ENCODE measurements at regions of chr1 and their contacts with region 1.

Region 1: DNA sequence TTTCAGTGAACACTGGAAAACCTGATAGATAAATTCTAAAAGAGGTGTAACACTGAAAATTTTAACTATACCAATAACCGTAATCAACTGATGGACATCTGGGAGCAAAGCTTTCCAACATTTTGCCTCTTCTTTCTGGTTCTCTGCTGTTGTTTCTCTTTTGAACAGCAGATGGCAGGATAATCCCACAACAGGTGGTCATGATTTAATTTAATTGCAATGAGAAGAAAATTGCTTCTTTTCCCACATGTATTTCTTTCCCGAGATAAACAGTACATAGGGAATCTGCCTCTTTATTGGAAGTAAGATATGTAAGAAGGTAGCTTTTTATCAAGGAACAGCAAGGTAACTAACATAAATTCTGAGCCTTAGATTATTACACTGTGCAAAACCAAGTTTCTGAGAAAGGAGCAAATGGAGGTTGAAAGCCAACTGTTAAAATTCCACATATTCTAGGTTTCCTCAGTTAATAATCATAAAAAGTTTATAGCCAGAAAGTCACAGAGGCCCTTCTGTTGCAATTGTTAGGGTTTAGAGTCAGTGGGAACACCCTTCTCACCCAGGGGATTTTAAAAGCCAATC is 72.9 kb downstream of the RPS6KA1 start:
- DNase-seq: peak in 5 of 9 experiments; percentile 16 to 81 (median 49)
- ATAC-seq: peak; percentile 67
- H3K4me3 ChIP-seq: no peak overlapping the region
- H3K4me3 Mint-ChIP-seq: no peak overlapping the region
- H3K27ac ChIP-seq: no peak overlapping the region
- H3K27ac Mint-ChIP-seq: no peak overlapping the region
- H3K4me1 ChIP-seq: peaks cover 5% of the 10 kb centered on the region
- H3K4me1 Mint-ChIP-seq: peaks cover 8% of the 10 kb centered on the region
- H3K27me3 ChIP-seq: no peaks in the 10 kb centered on the region
- H3K27me3 Mint-ChIP-seq: no peaks in the 10 kb centered on the region
- CTCF ChIP-seq: peak; percentile 98

Region 2: GRCh38 chr1:26372039-26372438 is 230.4 kb before region 1 on chr1:
- CTCF ChIA-PET with region 1: no interaction called
- POLR2A ChIA-PET with region 1: no interaction called
- intact Hi-C with region 1: no loop called
- DNase-seq: no peak
- ATAC-seq: no peak
- H3K4me3 ChIP-seq: no peak overlapping the region
- H3K4me3 Mint-ChIP-seq: no peak overlapping the region
- H3K27ac ChIP-seq: peak overlapping the region in 1 of 2 experiments; percentile 54
- H3K27ac Mint-ChIP-seq: peak overlapping the region; percentile 66
- H3K4me1 ChIP-seq: peaks cover 88% of the 10 kb centered on the region
- H3K4me1 Mint-ChIP-seq: peaks cover 82% of the 10 kb centered on the region
- H3K27me3 ChIP-seq: no peaks in the 10 kb centered on the region
- H3K27me3 Mint-ChIP-seq: no peaks in the 10 kb centered on the region
- CTCF ChIP-seq: no peak

Region 3: DNA sequence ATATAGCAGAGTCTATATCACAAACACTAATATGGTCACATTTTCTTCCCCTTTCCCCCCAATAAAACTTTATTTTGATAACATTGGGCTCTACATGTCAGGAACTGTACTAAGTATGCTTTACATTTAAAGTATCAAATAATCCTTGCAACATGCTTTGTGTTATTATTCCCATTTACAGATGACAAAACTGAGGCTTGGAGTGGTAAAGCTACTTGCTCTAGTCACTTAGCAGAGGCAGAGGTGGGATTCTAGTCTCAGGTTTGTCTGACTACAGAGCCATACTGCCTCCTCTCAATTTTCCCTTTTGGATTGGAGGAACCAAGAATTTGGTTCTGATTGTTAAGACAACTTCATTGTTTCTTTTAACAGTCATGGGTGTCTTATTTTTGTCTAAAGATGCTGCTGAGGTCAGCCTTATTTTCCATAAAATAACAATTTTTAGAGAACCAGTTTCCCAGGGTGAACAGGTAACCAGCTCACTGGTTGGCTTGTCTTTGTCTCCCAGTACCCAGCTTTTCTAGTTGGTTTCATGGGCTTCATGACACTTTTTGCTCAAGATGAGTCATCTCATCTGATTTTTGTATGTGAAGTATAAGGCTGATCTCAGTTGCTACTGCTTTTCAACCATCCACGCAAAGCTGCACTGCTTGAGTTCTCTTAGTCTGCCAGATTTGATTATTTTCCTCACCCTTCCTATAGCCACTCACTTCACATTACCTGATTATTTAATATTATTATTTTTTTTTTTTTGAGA is 12.4 kb after region 1 on chr1:
- CTCF ChIA-PET with region 1: interaction called, 24 read pairs
- POLR2A ChIA-PET with region 1: interaction called, 3 read pairs
- intact Hi-C with region 1: no loop called
- DNase-seq: no peak
- ATAC-seq: no peak
- H3K4me3 ChIP-seq: no peak overlapping the region
- H3K4me3 Mint-ChIP-seq: no peak overlapping the region
- H3K27ac ChIP-seq: no peak overlapping the region
- H3K27ac Mint-ChIP-seq: no peak overlapping the region
- H3K4me1 ChIP-seq: peaks cover 16% of the 10 kb centered on the region
- H3K4me1 Mint-ChIP-seq: peaks cover 18% of the 10 kb centered on the region
- H3K27me3 ChIP-seq: no peaks in the 10 kb centered on the region
- H3K27me3 Mint-ChIP-seq: no peaks in the 10 kb centered on the region
- CTCF ChIP-seq: no peak

Region 4: DNA sequence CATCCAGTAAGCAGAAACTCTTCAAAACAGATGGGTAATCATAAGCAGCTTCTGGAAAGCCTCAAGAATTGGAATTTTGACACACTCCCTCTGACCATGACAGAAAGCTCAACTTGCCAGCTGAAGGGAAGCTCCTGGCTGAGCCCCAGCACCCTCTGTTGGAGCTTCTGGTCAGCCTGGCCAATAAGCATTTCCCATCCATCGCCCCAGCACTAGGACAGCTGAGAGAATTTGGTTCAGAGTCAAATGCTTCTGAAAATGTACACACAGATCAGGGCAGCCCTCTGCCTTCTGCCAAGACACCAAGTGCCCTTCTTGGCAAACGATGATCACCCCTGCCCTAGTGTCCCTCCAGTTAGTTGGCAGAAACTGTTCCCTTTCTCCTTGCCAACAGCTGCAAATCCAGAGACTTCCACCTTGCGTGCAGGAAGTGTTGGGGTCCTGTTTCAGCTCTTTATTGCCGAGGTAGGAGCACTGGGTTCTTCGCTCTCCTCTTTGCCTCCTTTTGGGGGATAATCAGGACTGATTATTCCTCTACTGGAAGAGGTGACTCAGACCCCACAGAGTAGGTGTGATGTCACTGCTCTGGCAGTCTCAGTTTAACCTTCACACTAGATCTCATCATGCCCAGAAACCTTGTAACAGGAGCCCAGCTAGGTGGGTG is 197.1 kb after region 1 on chr1:
- CTCF ChIA-PET with region 1: interaction called, 36 read pairs
- POLR2A ChIA-PET with region 1: no interaction called
- intact Hi-C with region 1: no loop called
- DNase-seq: peak in 5 of 9 experiments; percentile 20 to 63 (median 39)
- ATAC-seq: peak; percentile 69
- H3K4me3 ChIP-seq: no peak overlapping the region
- H3K4me3 Mint-ChIP-seq: peak overlapping the region; percentile 73
- H3K27ac ChIP-seq: peak overlapping the region; percentile 26 to 87
- H3K27ac Mint-ChIP-seq: peak overlapping the region; percentile 97
- H3K4me1 ChIP-seq: peaks cover 39% of the 10 kb centered on the region
- H3K4me1 Mint-ChIP-seq: peaks cover 36% of the 10 kb centered on the region
- H3K27me3 ChIP-seq: no peaks in the 10 kb centered on the region
- H3K27me3 Mint-ChIP-seq: no peaks in the 10 kb centered on the region
- CTCF ChIP-seq: no peak

Region 5: GRCh38 chr1:26853156-26853555 is 250.7 kb after region 1 on chr1:
- CTCF ChIA-PET with region 1: interaction called, 9 read pairs
- POLR2A ChIA-PET with region 1: no interaction called
- intact Hi-C with region 1: loop called in 1 of 2 experiments (anchors 1 kb)
- DNase-seq: peak; percentile 58 to 90 (median 80)
- ATAC-seq: peak; percentile 94
- H3K4me3 ChIP-seq: no peak overlapping the region
- H3K4me3 Mint-ChIP-seq: no peak overlapping the region
- H3K27ac ChIP-seq: no peak overlapping the region
- H3K27ac Mint-ChIP-seq: no peak overlapping the region
- H3K4me1 ChIP-seq: no peaks in the 10 kb centered on the region
- H3K4me1 Mint-ChIP-seq: no peaks in the 10 kb centered on the region
- H3K27me3 ChIP-seq: no peaks in the 10 kb centered on the region
- H3K27me3 Mint-ChIP-seq: no peaks in the 10 kb centered on the region
- CTCF ChIP-seq: peak; percentile 78

Region 6: DNA sequence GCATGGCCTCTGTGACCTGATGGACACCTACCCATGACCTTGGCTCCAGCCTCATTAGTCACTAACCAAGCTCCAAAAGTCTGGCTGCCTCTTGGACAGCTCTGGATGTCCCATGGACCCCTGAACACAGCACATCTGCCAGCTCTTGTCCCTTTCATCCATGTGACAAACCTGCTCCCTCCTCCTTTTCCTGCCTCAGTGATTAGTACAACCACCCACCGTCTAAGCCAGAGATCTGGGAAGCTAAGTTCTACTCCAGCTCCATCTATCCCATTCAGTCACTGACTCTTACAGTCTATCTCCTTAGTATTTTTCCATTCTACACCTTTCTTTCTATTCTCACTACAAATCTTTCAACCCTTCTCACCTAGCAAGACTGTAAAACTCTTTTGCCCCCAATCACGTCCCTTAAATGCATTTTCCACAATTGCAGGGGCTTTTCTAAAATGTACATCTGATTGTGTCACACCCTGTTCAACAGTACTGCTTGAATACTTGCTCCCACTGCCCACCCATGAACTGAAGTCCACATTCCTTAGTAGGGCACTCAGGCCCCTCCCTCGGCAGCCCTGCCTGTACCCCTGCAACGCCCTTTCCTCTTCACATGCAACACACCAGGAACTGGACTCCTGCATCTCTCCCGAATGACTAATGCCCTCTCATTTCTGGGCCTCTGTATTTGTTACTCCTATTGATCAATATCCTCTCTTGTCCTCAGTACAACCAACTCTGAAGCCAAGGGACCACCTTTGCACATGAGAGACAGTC is 280.4 kb after region 1 on chr1:
- CTCF ChIA-PET with region 1: interaction called, 17 read pairs
- POLR2A ChIA-PET with region 1: no interaction called
- intact Hi-C with region 1: loop called (anchors 1 kb)
- DNase-seq: no peak
- ATAC-seq: no peak
- H3K4me3 ChIP-seq: no peak overlapping the region
- H3K4me3 Mint-ChIP-seq: no peak overlapping the region
- H3K27ac ChIP-seq: no peak overlapping the region
- H3K27ac Mint-ChIP-seq: no peak overlapping the region
- H3K4me1 ChIP-seq: no peaks in the 10 kb centered on the region
- H3K4me1 Mint-ChIP-seq: peaks cover 18% of the 10 kb centered on the region
- H3K27me3 ChIP-seq: no peaks in the 10 kb centered on the region
- H3K27me3 Mint-ChIP-seq: no peaks in the 10 kb centered on the region
- CTCF ChIP-seq: no peak

Measured in CD8-positive, alpha-beta T cell (primary cell).